Activated B cell treated with CpG ODN at 0.5 μM for 24 hours (primary cell): ENCODE measurements at regions of chr15 and their contacts with region 1.

Region 1: DNA sequence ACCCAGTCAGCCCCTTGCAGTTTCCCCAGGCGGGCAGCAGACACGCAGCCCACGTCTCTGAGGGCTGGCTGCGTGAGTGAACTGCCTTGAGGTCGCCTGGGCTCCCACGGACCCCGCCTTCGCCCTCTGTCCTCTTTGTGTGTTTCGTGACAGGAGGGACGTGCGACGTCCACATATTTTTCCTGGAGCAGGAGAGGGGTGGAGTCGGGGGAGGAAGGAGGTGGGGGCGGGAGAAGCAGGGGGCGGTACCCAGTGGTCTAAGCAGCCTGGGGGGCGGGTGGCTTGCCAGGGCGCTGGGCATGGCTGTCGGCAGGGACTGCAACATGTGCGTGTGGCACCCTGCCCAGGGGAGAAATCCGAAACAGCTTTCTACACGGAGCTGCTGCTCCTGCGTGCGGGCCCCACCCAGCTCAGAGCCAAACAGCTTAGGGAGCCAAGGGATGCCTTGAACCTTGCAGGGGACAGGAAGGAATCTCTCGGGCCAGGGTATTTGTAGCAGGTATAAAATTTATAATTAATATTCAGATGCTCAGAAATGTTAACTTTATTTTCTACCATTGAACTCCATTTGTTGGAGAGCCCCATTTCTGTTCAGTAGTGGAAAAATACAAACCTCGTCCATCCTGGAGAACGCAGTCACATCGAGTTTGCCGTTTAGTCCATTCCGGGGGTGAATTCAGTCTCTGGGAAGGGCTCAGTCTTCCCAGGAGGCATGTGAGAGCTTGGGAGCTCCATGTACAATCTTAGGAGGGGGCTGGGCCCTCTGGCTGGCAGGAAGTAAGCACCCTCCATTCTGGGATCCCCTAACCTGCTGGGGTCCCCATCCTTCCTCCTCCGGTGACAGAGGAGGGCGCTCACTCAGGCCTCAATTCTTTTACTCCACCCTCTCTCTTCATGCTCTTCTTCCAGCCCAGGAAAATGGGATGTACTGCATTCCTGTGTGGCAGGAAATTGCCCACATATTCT is 79.1 kb upstream of the MEF2A start:
- DNase-seq: no peak
- ATAC-seq: peak; percentile 75
- H3K4me3 Mint-ChIP-seq: peak overlapping the region; percentile 77
- H3K27ac Mint-ChIP-seq: no peak overlapping the region
- H3K4me1 Mint-ChIP-seq: peaks cover 25% of the 10 kb centered on the region
- H3K27me3 Mint-ChIP-seq: no peaks in the 10 kb centered on the region
- CTCF ChIP-seq: no peak

Region 2: GRCh38 chr15:99502182-99502581 is 15.5 kb after region 1 on chr15:
- CTCF ChIA-PET with region 1: interaction called, 3 read pairs
- POLR2A ChIA-PET with region 1: interaction called, 18 read pairs
- intact Hi-C with region 1: loop called (anchors 2 kb)
- DNase-seq: peak; percentile 66
- ATAC-seq: peak; percentile 76
- H3K4me3 Mint-ChIP-seq: peak overlapping the region; percentile 66
- H3K27ac Mint-ChIP-seq: peak overlapping the region; percentile 92
- H3K4me1 Mint-ChIP-seq: peaks cover 76% of the 10 kb centered on the region
- H3K27me3 Mint-ChIP-seq: no peaks in the 10 kb centered on the region
- CTCF ChIP-seq: no peak

Region 3: DNA sequence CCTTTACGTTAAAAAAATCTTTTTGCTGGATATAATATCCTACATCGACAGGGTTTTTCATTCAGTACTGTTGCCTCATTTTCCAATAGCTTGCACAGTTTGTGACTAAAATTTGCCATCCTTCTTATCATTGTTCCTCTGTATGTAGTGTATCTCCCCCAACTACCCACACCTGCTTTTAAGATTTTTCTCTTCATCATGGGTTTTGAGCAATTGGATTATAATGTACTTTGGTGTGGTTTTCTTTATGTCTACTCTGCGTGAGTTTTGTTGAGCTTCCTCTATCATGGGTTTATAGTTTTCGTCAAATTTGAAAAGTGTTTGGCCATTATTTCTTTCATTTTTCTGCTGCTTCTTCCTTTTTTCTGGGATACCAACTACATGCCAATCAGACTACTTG is 39.5 kb after region 1 on chr15:
- CTCF ChIA-PET with region 1: no interaction called
- POLR2A ChIA-PET with region 1: no interaction called
- intact Hi-C with region 1: no loop called
- DNase-seq: no peak
- ATAC-seq: no peak
- H3K4me3 Mint-ChIP-seq: no peak overlapping the region
- H3K27ac Mint-ChIP-seq: no peak overlapping the region
- H3K4me1 Mint-ChIP-seq: peaks cover 32% of the 10 kb centered on the region
- H3K27me3 Mint-ChIP-seq: no peaks in the 10 kb centered on the region
- CTCF ChIP-seq: no peak